ENCODE measurements at regions of chr10 and their contacts with region 1.

Region 1: DNA sequence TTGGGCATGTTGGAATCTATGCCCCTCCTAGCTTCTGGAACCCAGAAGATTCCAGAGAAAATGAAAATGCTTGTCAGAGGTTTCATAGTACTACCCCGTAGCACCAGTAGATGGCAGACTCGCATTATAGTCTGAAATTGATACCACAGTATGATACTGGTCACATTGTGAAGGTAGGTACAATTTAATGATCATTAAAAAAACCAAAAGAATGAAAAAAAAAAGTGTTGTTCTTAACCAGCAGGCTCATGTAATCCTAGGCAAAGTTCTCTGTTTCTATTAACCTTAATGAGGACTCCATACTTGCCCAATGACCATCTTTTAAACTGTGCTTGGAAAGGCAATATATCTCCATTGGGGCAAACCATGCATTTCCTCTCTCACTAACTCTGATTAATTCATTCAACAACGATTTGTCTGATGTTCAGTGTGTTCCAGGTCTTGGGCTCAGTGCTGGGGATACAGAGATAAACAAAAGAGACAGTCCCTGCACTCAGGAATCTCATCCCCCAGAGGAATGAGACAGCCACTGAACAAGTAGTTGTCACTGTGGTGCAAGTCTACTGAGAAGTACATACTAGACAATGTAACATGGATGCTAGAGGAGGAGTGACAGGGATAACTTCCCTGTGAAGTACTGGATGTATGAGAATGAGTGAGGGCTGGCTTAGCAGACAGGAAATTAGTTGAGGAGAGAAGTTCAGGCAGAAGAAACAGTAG is 223.5 kb upstream of the PHYHIPL start:
- DNase-seq: peak; percentile 41 to 86 (median 69)
- H3K4me3 ChIP-seq: no peak overlapping the region
- H3K27ac ChIP-seq: peak overlapping the region in 2 of 5 donors; percentile 27 to 70
- H3K4me1 ChIP-seq: peaks cover 7 to 13% of the 10 kb centered on the region in 2 donors
- H3K27me3 ChIP-seq: no peaks in the 10 kb centered on the region
- CTCF ChIP-seq: peak; percentile 62 to 91 (median 84)
- POLR2A ChIP-seq: no peak

Region 2: GRCh38 chr10:59181668-59182067 is 228.8 kb after region 1 on chr10:
- intact Hi-C with region 1: loop called (anchors 5 to 10 kb)
- DNase-seq: peak in 3 of 7 donors; percentile 7 to 21 (median 14)
- H3K4me3 ChIP-seq: no peak overlapping the region
- H3K27ac ChIP-seq: no peak overlapping the region
- H3K4me1 ChIP-seq: peaks cover 0 to 4% of the 10 kb centered on the region in 2 donors
- H3K27me3 ChIP-seq: no peaks in the 10 kb centered on the region
- CTCF ChIP-seq: peak; percentile 29 to 64 (median 56)
- POLR2A ChIP-seq: no peak

Region 3: GRCh38 chr10:59240582-59241183 is 287.8 kb after region 1 on chr10:
- intact Hi-C with region 1: loop called in 1 of 2 experiments (anchors 5 kb)
- DNase-seq: peak in 1 of 7 donors; percentile 8
- H3K4me3 ChIP-seq: no peak overlapping the region
- H3K27ac ChIP-seq: no peak overlapping the region
- H3K4me1 ChIP-seq: no peaks in the 10 kb centered on the region
- H3K27me3 ChIP-seq: no peaks in the 10 kb centered on the region
- CTCF ChIP-seq: peak; percentile 53 to 86 (median 79)
- POLR2A ChIP-seq: no peak

Region 4: GRCh38 chr10:59611043-59611442 is 658.1 kb after region 1 on chr10:
- intact Hi-C with region 1: loop called in 1 of 2 experiments (anchors 10 kb)
- DNase-seq: no peak
- H3K4me3 ChIP-seq: no peak overlapping the region
- H3K27ac ChIP-seq: no peak overlapping the region
- H3K4me1 ChIP-seq: peaks cover 0 to 4% of the 10 kb centered on the region in 2 donors
- H3K27me3 ChIP-seq: no peaks in the 10 kb centered on the region
- CTCF ChIP-seq: no peak
- POLR2A ChIP-seq: no peak

Measured in adrenal gland (tissue), 19 donors.